ENCODE measurements at regions of chr3 and their contacts with region 1.

Region 1: GRCh38 chr3:49839193-49839809 is 17.1 kb downstream of the TRAIP start:
- DNase-seq: peak; percentile 82
- CTCF ChIP-seq: peak; percentile 92

Region 2: DNA sequence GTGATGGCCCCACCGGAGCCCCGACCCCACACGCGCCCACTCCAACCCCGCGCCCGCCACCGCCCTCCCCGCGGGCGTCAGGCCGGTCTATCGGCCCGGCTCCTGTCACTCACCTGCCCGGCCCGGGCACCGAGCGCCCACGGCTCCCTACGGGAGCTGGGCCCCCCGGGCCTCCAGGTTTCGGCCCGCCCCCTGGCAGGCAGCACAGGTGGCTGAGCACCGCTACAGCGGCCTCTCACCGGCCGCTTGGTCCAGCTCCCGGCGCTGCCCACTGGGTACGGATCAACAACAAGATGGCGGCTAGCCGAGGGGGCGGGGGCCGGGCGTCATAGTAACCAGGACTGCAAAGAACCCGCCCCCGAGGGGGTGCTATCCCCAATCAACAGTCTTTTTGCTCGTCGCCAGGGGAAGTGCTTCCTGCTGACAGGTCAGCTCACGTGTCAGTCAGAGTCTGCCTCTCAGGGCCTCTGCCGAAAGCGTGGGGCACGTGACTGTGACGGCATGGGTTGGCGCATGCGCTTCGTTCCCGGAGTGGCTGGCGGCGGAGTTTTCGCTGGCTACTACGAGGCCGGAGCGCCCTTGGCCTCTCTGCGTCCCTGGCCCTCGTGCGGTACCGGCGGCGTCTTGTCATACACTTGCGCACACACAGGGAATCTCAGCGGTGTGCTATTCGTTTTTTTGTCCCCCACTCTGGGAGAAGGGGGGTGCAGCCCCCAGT is 52.9 kb before region 1 on chr3 and contains the start of gene IP6K1:
- CTCF ChIA-PET with region 1: interaction called, 558 read pairs
- POLR2A ChIA-PET with region 1: interaction called, 6 read pairs
- DNase-seq: peak; percentile 100
- CTCF ChIP-seq: no peak

Region 3: DNA sequence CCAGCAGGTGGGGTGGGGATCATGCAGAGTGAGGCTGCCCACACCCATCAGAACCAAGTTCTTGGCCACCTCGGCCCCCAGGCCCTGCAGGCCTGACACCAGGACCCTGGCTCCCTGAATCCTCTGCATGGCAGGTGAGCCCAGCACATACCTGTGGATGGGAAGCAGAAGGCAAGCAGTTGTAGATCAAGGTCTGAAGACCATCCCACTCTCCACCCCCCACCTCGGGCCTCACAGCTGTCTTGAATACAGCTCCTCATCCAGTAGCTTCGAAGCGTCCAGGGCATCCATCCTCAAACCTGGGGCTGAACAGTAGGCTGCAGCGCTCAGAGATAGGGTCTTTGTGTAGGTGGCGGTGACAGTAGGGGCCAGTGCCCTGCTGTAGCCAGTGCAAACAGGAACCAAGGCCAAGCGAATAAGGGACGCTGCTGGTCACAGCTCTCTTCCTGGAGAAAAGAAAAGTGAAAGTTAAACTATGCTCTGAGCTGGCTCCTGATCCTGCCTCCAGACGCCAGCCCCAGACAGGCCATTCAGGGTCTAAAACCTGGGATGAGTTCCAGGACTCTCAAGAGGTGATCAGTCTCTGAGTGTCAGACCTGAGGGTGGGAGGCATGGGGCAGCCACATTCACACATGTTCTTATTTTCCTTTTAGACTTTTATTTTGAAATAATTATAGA is 25.7 kb before region 1 on chr3 and contains the start of gene UBA7:
- CTCF ChIA-PET with region 1: interaction called, 558 read pairs
- POLR2A ChIA-PET with region 1: no interaction called
- DNase-seq: peak; percentile 84
- CTCF ChIP-seq: no peak

Region 4: GRCh38 chr3:49856181-49857005 is 17.1 kb after region 1 on chr3 and contains the start of gene TRAIP:
- CTCF ChIA-PET with region 1: interaction called, 34 read pairs
- POLR2A ChIA-PET with region 1: no interaction called
- DNase-seq: peak; percentile 100
- CTCF ChIP-seq: no peak

Region 5: DNA sequence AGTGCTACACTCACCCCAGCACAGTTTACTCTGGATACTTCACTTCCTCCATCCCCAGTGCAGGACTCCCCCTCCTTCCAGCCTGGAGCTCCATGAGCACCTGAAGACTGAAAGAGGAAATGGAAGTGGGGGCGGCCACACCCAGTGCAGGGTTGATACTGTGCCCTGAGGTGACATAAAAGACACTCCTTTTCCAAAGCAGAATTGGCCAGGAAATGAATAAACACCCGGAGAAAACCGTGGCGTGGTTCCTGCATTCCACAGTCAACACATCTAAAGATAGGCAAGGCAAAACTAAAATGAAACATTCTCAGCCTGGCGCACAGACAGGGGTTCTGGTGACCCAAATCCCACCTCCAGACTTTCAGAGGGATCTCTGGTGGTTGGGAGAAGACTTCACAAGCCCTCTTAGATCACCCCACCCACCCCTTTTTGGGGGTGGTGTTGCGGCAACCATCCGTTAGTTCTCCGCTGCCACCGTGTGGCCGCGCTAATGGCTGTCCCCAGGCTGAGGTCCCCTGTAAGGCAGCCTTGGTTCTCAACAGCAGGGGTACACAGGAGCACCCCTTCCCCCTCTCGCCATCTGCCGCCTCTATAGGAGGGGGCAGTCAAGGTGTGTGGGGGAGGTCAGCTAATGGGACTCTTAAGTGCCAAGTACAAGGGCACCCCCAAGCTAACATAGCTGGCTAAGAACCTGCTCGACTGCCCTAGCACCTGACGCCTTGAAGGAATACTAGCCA is 66.9 kb after region 1 on chr3:
- CTCF ChIA-PET with region 1: interaction called, 11 read pairs
- POLR2A ChIA-PET with region 1: no interaction called
- DNase-seq: peak; percentile 75
- CTCF ChIP-seq: peak; percentile 63

Measured in GM10248 (cell line).